ENCODE measurements at regions of chr2 and their contacts with region 1.

Region 1: GRCh38 chr2:112726497-112727190 is 5.8 kb downstream of the NT5DC4 start:
- DNase-seq: peak; percentile 91 to 93 (median 93)
- ATAC-seq: peak; percentile 92 to 96 (median 94)
- H3K4me3 ChIP-seq: no peak overlapping the region
- H3K27ac ChIP-seq: no peak overlapping the region
- H3K4me1 ChIP-seq: no peaks in the 10 kb centered on the region
- H3K27me3 ChIP-seq: no peaks in the 10 kb centered on the region
- CTCF ChIP-seq: peak; percentile 97 to 99 (median 99)
- POLR2A ChIP-seq: no peak

Region 2: GRCh38 chr2:112626604-112627059 is 100.0 kb before region 1 on chr2:
- intact Hi-C with region 1: loop called (anchors 10 kb)
- DNase-seq: peak; percentile 64 to 68 (median 68)
- ATAC-seq: peak; percentile 69 to 88 (median 84)
- H3K4me3 ChIP-seq: no peak overlapping the region
- H3K27ac ChIP-seq: no peak overlapping the region
- H3K4me1 ChIP-seq: peaks cover 0 to 6% (median 0%) of the 10 kb centered on the region in 4 donors
- H3K27me3 ChIP-seq: no peaks in the 10 kb centered on the region
- CTCF ChIP-seq: peak; percentile 84 to 93 (median 92)
- POLR2A ChIP-seq: no peak

Region 3: GRCh38 chr2:112636231-112636960 is 90.2 kb before region 1 on chr2:
- intact Hi-C with region 1: loop called in 1 of 2 experiments (anchors 10 kb)
- DNase-seq: peak in 1 of 3 donors; percentile 23
- ATAC-seq: peak in 1 of 4 donors; percentile 18
- H3K4me3 ChIP-seq: no peak overlapping the region
- H3K27ac ChIP-seq: peak overlapping the region in 1 of 3 donors; percentile 32
- H3K4me1 ChIP-seq: peaks cover 0 to 10% (median 0%) of the 10 kb centered on the region in 4 donors
- H3K27me3 ChIP-seq: no peaks in the 10 kb centered on the region
- CTCF ChIP-seq: no peak
- POLR2A ChIP-seq: no peak